ENCODE measurements at regions of chr12 and their contacts with region 1.

Region 1: GRCh38 chr12:32178341-32179010 is 71.8 kb downstream of the BICD1 start:
- DNase-seq: no peak
- H3K4me3 ChIP-seq: no peak overlapping the region
- H3K27ac ChIP-seq: no peak overlapping the region
- H3K4me1 ChIP-seq: no peaks in the 10 kb centered on the region
- H3K27me3 ChIP-seq: no peaks in the 10 kb centered on the region
- CTCF ChIP-seq: no peak
- EP300 ChIP-seq: no peak
- POLR2A ChIP-seq: no peak

Region 2: DNA sequence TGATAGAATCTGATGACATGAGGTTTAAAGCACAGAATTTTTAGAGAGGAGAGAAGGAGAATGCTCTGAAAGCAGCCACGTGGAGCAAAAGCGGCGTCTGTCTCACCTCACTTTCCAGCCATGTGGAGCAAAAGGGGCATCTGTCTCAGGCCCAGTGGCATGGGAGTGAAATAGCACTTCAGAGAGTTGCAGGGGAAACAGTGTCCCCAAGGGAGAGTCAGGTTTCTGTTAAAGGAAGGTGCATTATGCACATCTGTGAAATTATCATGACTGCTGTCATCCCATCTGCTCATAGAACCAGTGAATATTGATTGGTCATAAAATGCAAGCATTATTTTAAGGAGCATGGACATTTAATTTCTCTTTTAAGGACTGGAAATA is 52.1 kb after region 1 on chr12:
- in situ Hi-C with region 1: loop called in 1 of 4 experiments (anchors 10 kb)
- intact Hi-C with region 1: no loop called
- DNase-seq: no peak
- H3K4me3 ChIP-seq: no peak overlapping the region
- H3K27ac ChIP-seq: no peak overlapping the region
- H3K4me1 ChIP-seq: no peaks in the 10 kb centered on the region
- H3K27me3 ChIP-seq: no peaks in the 10 kb centered on the region
- CTCF ChIP-seq: no peak
- EP300 ChIP-seq: no peak
- POLR2A ChIP-seq: no peak

Region 3: GRCh38 chr12:32322354-32322753 is 143.9 kb after region 1 on chr12:
- in situ Hi-C with region 1: no loop called
- intact Hi-C with region 1: no loop called
- DNase-seq: no peak
- H3K4me3 ChIP-seq: no peak overlapping the region
- H3K27ac ChIP-seq: no peak overlapping the region
- H3K4me1 ChIP-seq: no peaks in the 10 kb centered on the region
- H3K27me3 ChIP-seq: no peaks in the 10 kb centered on the region
- CTCF ChIP-seq: no peak
- EP300 ChIP-seq: no peak
- POLR2A ChIP-seq: no peak